GM12878 (cell line): ENCODE measurements at regions of chr16 and their contacts with region 1.

Region 1: DNA sequence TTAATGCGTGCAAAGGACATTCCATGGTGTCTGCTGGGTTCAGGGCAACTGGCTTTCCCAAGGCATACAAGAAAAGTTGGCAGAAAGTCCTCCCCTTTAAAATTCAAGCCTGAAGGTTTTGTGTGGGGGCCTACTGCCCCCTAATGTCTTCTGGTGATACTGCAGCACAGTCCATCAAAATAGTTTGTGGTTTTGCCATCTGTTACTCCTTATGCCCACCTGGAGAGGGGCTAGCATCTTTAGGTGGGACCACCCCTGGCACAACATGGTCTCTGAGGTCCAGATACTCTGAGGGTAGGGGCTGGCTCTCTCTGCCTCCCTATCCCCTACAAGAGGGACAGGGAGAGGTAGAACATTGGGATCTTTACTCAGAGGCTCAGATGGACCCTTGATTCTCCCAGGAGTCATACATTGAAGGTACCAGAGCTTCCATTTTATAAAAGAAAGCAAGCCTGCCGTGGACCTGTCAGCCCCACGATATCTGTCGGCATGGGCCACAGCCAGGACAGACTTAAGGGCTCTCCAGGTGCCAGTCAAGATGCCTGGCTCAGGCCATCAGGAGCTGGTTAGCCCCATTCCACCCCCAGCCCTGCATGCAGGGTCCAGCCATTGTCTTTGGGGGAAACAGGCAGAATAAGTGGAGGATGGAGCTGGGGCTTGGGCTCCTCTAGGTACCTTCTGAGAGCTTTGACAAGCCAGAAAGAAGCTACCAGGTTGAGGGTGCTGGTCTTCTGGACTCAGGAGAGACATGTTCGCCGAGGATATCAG is 6.3 kb downstream of the ESRP2 start:
- DNase-seq: no peak
- ATAC-seq: peak; percentile 47
- H3K4me3 ChIP-seq: no peak overlapping the region
- H3K27ac ChIP-seq: no peak overlapping the region
- H3K4me1 ChIP-seq: peaks cover 12% of the 10 kb centered on the region
- H3K27me3 ChIP-seq: no peaks in the 10 kb centered on the region
- CTCF ChIP-seq: peak; percentile 87 to 90 (median 88)
- EP300 ChIP-seq: no peak
- POLR2A ChIP-seq: no peak
- RAD21 ChIP-seq: peak; percentile 94

Region 2: DNA sequence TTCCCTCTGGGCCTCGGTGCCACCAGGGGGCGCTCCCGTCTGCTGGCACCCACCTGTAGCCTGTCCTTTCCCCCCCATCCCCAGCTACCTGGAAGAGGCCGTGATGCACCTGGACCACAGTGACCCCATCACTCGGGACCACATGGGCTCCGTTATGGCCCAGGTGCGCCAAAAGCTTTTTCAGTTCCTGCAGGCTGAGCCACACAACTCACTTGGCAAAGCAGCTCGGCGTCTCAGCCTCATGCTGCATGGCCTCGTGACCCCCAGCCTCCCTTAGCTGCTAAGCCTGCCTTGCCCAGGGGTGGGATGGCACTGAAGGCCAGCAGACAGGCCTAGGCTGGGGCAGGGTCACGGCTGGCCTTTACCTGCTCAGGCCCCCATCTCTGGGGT is 345.7 kb before region 1 on chr16:
- CTCF ChIA-PET with region 1: no interaction called
- POLR2A ChIA-PET with region 1: no interaction called
- RAD21 ChIA-PET with region 1: no interaction called
- SMC1A ChIA-PET with region 1: no interaction called
- in situ Hi-C with region 1: no loop called
- intact Hi-C with region 1: loop called (anchors 5 kb)
- DNase-seq: no peak
- ATAC-seq: peak; percentile 93
- H3K4me3 ChIP-seq: no peak overlapping the region
- H3K27ac ChIP-seq: no peak overlapping the region
- H3K4me1 ChIP-seq: no peaks in the 10 kb centered on the region
- H3K27me3 ChIP-seq: no peaks in the 10 kb centered on the region
- CTCF ChIP-seq: peak; percentile 86 to 92 (median 90)
- EP300 ChIP-seq: no peak
- POLR2A ChIP-seq: no peak
- RAD21 ChIP-seq: peak; percentile 70

Region 3: GRCh38 chr16:67993189-67994039 is 236.2 kb before region 1 on chr16:
- CTCF ChIA-PET with region 1: interaction called, 5 read pairs
- POLR2A ChIA-PET with region 1: no interaction called
- RAD21 ChIA-PET with region 1: interaction called, 3 read pairs
- SMC1A ChIA-PET with region 1: no interaction called
- in situ Hi-C with region 1: loop called (anchors 5 kb)
- intact Hi-C with region 1: loop called (anchors 1 kb)
- DNase-seq: no peak
- ATAC-seq: peak; percentile 92
- H3K4me3 ChIP-seq: peak overlapping the region; percentile 24; the same call in 1 of the 2 replicates
- H3K27ac ChIP-seq: peak overlapping the region; percentile 64
- H3K4me1 ChIP-seq: peaks cover 39% of the 10 kb centered on the region
- H3K27me3 ChIP-seq: no peaks in the 10 kb centered on the region
- CTCF ChIP-seq: peak; percentile 92 to 95 (median 94)
- EP300 ChIP-seq: no peak
- POLR2A ChIP-seq: peak; percentile 70
- RAD21 ChIP-seq: peak; percentile 52

Region 4: DNA sequence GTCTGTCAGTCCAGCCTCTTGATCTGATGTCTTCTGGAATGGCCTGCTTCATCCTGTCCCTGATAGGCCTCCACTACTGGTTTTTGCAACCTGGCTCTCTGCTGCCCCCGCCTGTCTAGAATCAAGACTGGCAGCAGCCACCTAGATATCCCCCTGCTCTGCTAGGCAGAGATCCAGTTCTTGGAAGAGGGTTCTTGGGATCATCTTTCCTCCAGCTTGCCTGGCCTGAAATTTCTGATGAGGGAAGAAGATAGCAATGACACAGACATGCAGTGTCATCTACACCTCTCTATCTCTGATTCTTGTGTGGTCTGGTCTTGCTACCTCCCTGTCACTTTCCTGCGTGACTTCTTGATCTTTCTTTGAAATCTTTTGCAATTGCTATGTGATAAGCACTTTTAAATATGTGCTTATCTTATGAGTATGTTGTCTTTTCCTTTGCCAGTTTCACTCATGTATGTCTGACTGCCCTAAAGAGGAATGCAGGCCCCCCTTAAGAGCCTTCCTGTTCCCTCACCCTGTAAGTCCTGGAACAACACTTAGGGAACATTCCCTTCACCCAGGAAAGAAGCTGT is 164.7 kb before region 1 on chr16:
- CTCF ChIA-PET with region 1: interaction called, 13 read pairs
- POLR2A ChIA-PET with region 1: no interaction called
- RAD21 ChIA-PET with region 1: interaction called, 3 read pairs
- SMC1A ChIA-PET with region 1: interaction called, 5 read pairs
- in situ Hi-C with region 1: no loop called
- intact Hi-C with region 1: loop called (anchors 2 kb)
- DNase-seq: no peak
- ATAC-seq: peak; percentile 98
- H3K4me3 ChIP-seq: no peak overlapping the region
- H3K27ac ChIP-seq: no peak overlapping the region
- H3K4me1 ChIP-seq: peaks cover 4% of the 10 kb centered on the region; the same call in 1 of the 2 replicates
- H3K27me3 ChIP-seq: no peaks in the 10 kb centered on the region
- CTCF ChIP-seq: peak; percentile 87 to 88 (median 87)
- EP300 ChIP-seq: no peak
- POLR2A ChIP-seq: no peak
- RAD21 ChIP-seq: peak; percentile 70

Region 5: DNA sequence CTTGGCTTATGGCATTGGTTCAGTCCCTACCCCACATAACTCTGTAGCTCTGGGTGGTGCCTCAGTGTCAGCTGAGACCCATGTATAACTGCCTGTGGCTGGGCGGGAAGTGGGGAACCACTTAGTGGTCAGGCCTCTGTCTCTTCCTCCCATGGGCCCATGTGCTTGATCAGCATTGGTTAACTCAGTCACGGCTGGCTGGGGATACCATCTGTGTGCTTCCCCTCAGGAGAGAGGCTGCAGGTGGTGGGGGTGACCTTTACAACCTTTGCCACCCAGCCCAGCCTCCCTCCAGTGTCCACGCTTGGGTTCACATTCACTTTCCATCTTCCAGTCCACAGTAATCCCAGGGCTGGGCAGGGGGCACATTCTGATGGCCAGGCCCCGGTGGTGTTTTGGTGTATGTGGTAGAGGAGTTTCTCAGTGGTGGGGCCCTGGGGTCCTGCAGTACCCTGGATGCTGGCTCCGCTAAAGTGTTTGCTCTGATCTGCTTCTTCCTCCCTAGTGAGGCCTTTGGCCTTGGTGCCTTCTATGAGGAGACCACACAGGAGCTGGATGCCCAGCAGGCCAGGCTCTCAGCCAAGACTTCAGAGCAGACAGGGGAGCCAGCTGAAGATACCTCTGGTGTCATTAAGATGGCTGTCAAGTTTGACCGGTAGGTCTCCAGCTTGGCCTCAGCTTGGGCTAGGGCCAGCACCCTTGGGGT is 154.6 kb before region 1 on chr16:
- CTCF ChIA-PET with region 1: interaction called, 21 read pairs
- POLR2A ChIA-PET with region 1: interaction called, 4 read pairs
- RAD21 ChIA-PET with region 1: interaction called, 8 read pairs
- SMC1A ChIA-PET with region 1: interaction called, 18 read pairs
- in situ Hi-C with region 1: no loop called
- intact Hi-C with region 1: no loop called
- DNase-seq: peak; percentile 95
- ATAC-seq: peak; percentile 93
- H3K4me3 ChIP-seq: no peak overlapping the region
- H3K27ac ChIP-seq: peak overlapping the region; percentile 71
- H3K4me1 ChIP-seq: peaks cover 50% of the 10 kb centered on the region
- H3K27me3 ChIP-seq: no peaks in the 10 kb centered on the region
- CTCF ChIP-seq: no peak
- EP300 ChIP-seq: peak; percentile 69 to 92; a peak in 3 of 4 replicates
- POLR2A ChIP-seq: 0 out of 2 replicates have a peak, but pooled peaks have one; percentile 19
- RAD21 ChIP-seq: no peak

Region 6: GRCh38 chr16:68093816-68094613 is 135.6 kb before region 1 on chr16:
- CTCF ChIA-PET with region 1: interaction called, 72 read pairs
- POLR2A ChIA-PET with region 1: interaction called, 3 read pairs
- RAD21 ChIA-PET with region 1: interaction called, 16 read pairs
- SMC1A ChIA-PET with region 1: interaction called, 15 read pairs
- in situ Hi-C with region 1: loop called (anchors 5 kb)
- intact Hi-C with region 1: loop called (anchors 2 kb)
- DNase-seq: no peak
- ATAC-seq: peak; percentile 69
- H3K4me3 ChIP-seq: no peak overlapping the region
- H3K27ac ChIP-seq: no peak overlapping the region
- H3K4me1 ChIP-seq: peaks cover 23% of the 10 kb centered on the region
- H3K27me3 ChIP-seq: no peaks in the 10 kb centered on the region
- CTCF ChIP-seq: peak; percentile 38 to 55 (median 48); a peak in 4 of 6 replicates
- EP300 ChIP-seq: no peak
- POLR2A ChIP-seq: no peak
- RAD21 ChIP-seq: peak; percentile 69

Region 7: DNA sequence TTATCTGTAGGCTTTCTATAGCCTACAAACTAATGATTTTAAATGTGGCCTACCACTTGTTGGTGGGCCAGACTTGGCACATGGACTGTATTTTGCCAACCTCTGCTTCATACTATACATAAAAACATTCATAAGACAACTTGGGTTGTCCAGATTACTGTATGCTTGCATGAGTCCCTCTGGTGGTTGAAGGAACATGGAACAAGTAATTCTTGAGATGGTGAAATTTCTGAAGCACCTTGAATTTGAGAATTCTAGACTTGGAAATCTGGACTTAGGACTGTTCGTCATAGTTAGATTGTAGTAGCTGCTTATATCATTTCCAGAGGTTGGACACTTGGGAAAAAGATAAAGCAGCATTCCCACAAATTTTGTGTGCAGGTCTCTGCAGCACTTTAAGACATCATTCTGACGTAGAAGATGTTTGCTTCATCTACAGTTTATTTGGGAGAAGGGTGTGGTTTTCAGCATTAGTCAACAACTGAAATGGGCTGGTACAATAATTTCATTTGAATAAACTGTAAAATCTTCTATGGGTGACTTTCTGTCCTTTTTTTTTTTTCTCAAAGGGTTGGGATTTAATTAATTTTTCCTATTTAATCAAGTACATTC is 113.3 kb before region 1 on chr16:
- CTCF ChIA-PET with region 1: interaction called, 16 read pairs
- POLR2A ChIA-PET with region 1: no interaction called
- RAD21 ChIA-PET with region 1: interaction called, 7 read pairs
- SMC1A ChIA-PET with region 1: interaction called, 4 read pairs
- in situ Hi-C with region 1: no loop called
- intact Hi-C with region 1: no loop called
- DNase-seq: no peak
- ATAC-seq: peak; percentile 59
- H3K4me3 ChIP-seq: no peak overlapping the region
- H3K27ac ChIP-seq: no peak overlapping the region
- H3K4me1 ChIP-seq: peaks cover 19% of the 10 kb centered on the region
- H3K27me3 ChIP-seq: no peaks in the 10 kb centered on the region
- CTCF ChIP-seq: peak; percentile 47 to 58 (median 57); a peak in 5 of 6 replicates
- EP300 ChIP-seq: no peak
- POLR2A ChIP-seq: no peak
- RAD21 ChIP-seq: peak; percentile 61

Region 8: GRCh38 chr16:68351962-68352431 is 122.4 kb after region 1 on chr16:
- CTCF ChIA-PET with region 1: no interaction called
- POLR2A ChIA-PET with region 1: no interaction called
- RAD21 ChIA-PET with region 1: no interaction called
- SMC1A ChIA-PET with region 1: no interaction called
- in situ Hi-C with region 1: no loop called
- intact Hi-C with region 1: no loop called
- DNase-seq: no peak
- ATAC-seq: no peak
- H3K4me3 ChIP-seq: no peak overlapping the region
- H3K27ac ChIP-seq: no peak overlapping the region
- H3K4me1 ChIP-seq: peaks cover 17% of the 10 kb centered on the region
- H3K27me3 ChIP-seq: no peaks in the 10 kb centered on the region
- CTCF ChIP-seq: no peak
- EP300 ChIP-seq: no peak
- POLR2A ChIP-seq: no peak
- RAD21 ChIP-seq: no peak